ENCODE measurements at regions of chr20 and their contacts with region 1.

Region 1: DNA sequence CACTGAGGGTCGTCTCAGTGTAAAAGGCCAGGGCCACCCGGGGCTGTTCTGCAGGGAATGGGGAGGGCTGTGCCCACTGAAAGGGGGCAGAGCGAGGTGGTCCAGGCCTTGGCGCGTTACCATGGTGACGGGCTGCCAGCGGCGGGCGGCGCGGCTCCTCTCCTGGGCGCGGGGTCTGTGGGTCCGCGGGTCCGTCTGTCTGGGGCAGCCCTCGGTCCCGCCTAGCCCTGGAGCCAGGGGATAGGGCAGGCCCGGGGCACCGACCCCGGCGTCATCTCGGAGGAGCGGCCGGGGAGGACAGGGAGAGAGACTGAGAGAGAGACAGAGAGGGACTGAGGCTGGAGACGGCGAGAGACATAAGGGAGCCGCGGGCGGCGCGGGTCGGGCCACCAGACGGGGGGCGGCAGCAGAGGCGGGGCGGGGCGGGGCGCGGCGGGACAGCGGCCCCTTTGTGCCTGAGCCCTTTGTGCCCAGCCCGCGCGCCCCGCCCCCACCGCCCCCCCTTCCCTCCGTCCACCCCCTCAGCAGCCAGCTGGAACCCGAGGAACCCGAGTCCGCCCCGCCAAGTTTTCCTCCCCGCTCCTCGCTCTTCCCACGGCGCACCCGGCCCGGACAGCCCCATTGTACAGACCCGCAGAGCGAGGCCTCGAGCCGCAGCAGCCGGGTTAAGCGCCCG is at the start of gene KIAA1755:
- DNase-seq: peak in 1 of 2 donors; percentile 65
- H3K4me3 ChIP-seq: peak within 1 kb of the TSS; percentile 49 to 69
- H3K27ac ChIP-seq: peak within 1 kb of the TSS; percentile 92 to 93
- H3K4me1 ChIP-seq: peaks cover 0 to 18% of the 10 kb centered on the region in 2 donors
- H3K27me3 ChIP-seq: no peaks in the 10 kb centered on the region
- CTCF ChIP-seq: no peak
- total RNA-seq, gene KIAA1755: 15.2 TPM

Region 2: GRCh38 chr20:38270869-38271605 is 10.5 kb after region 1 on chr20:
- intact Hi-C with region 1: loop called (anchors 1 kb)
- DNase-seq: peak in 1 of 2 donors; percentile 91
- H3K4me3 ChIP-seq: peak overlapping the region in 1 of 2 donors; percentile 43
- H3K27ac ChIP-seq: peak overlapping the region; percentile 63 to 80
- H3K4me1 ChIP-seq: peaks cover 7 to 28% of the 10 kb centered on the region in 2 donors
- H3K27me3 ChIP-seq: no peaks in the 10 kb centered on the region
- CTCF ChIP-seq: no peak

Region 3: GRCh38 chr20:38290832-38291581 is 30.5 kb after region 1 on chr20:
- intact Hi-C with region 1: no loop called
- DNase-seq: peak in 1 of 2 donors; percentile 64
- H3K4me3 ChIP-seq: no peak overlapping the region
- H3K27ac ChIP-seq: no peak overlapping the region
- H3K4me1 ChIP-seq: no peaks in the 10 kb centered on the region
- H3K27me3 ChIP-seq: no peaks in the 10 kb centered on the region
- CTCF ChIP-seq: peak; percentile 29 to 51 (median 44)

Measured in ascending aorta (tissue), 2 donors.